HEK293 (cell line): ENCODE measurements at regions of chr10 and their contacts with region 1.

Region 1: DNA sequence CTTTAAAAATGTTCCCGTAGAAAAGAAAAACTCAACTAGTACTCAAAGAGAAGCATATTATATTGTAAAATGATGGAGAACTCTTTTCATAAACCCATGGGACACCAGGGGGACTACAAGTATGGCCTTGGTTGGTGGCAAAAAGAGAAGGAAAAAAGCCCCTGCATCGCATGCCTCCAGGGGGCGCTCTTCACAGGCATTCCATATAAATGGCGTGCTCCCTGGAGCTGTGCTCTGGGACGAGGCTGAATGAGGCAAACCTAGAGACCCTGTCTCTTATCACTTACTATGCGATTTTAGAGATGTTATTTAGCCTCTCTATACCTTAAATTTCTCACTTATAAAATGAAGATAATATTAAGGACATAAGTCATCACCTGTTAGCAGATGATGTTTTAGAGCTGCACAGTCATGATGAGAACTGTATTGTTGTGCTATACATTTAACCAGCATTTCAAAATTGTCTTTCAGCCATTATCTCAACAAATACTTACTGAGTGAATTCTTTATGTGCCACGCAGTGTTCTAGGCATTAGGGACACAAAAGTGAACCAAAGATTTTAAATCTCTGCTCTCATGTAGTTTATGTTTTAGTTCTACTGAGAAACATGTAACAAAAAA is 105.8 kb downstream of the ARHGAP21 start:
- H3K4me3 ChIP-seq: no peak overlapping the region
- H3K27ac ChIP-seq: no peak overlapping the region
- H3K4me1 ChIP-seq: peaks cover under 1% of the 10 kb centered on the region; the same call in 1 of the 2 replicates
- CTCF ChIP-seq: peak; percentile 50; the same call in 1 of the 2 replicates

Region 2: DNA sequence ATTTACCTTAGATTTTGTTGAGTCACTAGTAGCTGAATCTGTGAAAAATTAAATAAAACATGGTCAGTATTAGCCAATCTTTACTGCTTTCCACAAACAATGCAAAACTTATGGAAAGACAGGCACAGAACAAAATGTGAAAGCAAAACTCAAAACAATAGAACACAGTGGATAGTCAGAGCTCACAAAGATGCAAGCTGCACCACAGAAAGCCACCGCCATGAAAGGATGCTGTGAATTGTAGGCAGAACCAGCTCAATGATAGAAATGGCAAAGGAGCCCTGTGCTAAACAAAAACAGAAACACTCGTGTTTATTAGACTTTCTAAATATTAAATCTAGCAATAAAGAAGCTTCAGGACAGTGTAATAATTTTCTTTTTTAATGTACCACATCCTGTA is 28.6 kb before region 1 on chr10:
- CTCF ChIA-PET with region 1: interaction called, 14 read pairs
- POLR2A ChIA-PET with region 1: no interaction called
- H3K4me3 ChIP-seq: no peak overlapping the region
- H3K27ac ChIP-seq: no peak overlapping the region
- H3K4me1 ChIP-seq: no peaks in the 10 kb centered on the region
- CTCF ChIP-seq: no peak

Region 3: GRCh38 chr10:24603333-24603732 is 14.5 kb before region 1 on chr10:
- CTCF ChIA-PET with region 1: interaction called, 25 read pairs
- POLR2A ChIA-PET with region 1: no interaction called
- H3K4me3 ChIP-seq: no peak overlapping the region
- H3K27ac ChIP-seq: no peak overlapping the region
- H3K4me1 ChIP-seq: no peaks in the 10 kb centered on the region
- CTCF ChIP-seq: no peak

Region 4: GRCh38 chr10:24642622-24643417 is 24.9 kb after region 1 on chr10:
- CTCF ChIA-PET with region 1: interaction called, 10 read pairs
- POLR2A ChIA-PET with region 1: no interaction called
- H3K4me3 ChIP-seq: no peak overlapping the region
- H3K27ac ChIP-seq: no peak overlapping the region
- H3K4me1 ChIP-seq: no peaks in the 10 kb centered on the region; the same call in 1 of the 2 replicates
- CTCF ChIP-seq: peak; percentile 31; the same call in 1 of the 2 replicates